Motor neuron (in vitro differentiated cells): ENCODE measurements at regions of chr3 and their contacts with region 1.

Region 1: GRCh38 chr3:108552267-108553159 is 36.7 kb downstream of the CIP2A start:
- ATAC-seq: peak; percentile 23 to 63 (median 38)
- H3K4me3 ChIP-seq: no peak overlapping the region
- H3K27ac ChIP-seq: no peak overlapping the region
- H3K4me1 ChIP-seq: no peaks in the 10 kb centered on the region

Region 2: DNA sequence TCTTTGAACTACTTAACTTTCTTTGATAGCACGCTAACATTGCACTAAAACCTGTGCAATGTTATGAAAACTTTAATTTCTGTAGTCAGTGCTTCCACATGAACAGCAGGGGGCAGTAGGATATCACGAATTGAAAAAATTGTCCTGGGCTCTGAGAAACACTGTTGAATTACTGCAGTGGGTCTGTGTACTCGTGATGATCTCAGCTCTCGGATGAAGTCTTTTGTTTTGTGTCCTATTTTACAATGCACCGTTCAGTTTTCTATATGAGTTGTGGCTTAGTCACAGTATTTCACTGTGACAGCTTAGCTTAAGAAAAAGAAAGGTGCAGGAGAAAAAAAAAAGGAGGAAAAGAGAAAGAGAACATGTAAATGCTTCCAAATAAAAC is 1316.6 kb before region 1 on chr3:
- in situ Hi-C with region 1: loop called in 2 of 9 experiments (anchors 25 kb)
- ATAC-seq: peak; percentile 60 to 79 (median 74)
- H3K4me3 ChIP-seq: peak overlapping the region in 3 of 5 donors; percentile 4 to 11 (median 11)
- H3K27ac ChIP-seq: no peak overlapping the region
- H3K4me1 ChIP-seq: peaks cover 0 to 7% of the 10 kb centered on the region in 2 donors

Region 3: DNA sequence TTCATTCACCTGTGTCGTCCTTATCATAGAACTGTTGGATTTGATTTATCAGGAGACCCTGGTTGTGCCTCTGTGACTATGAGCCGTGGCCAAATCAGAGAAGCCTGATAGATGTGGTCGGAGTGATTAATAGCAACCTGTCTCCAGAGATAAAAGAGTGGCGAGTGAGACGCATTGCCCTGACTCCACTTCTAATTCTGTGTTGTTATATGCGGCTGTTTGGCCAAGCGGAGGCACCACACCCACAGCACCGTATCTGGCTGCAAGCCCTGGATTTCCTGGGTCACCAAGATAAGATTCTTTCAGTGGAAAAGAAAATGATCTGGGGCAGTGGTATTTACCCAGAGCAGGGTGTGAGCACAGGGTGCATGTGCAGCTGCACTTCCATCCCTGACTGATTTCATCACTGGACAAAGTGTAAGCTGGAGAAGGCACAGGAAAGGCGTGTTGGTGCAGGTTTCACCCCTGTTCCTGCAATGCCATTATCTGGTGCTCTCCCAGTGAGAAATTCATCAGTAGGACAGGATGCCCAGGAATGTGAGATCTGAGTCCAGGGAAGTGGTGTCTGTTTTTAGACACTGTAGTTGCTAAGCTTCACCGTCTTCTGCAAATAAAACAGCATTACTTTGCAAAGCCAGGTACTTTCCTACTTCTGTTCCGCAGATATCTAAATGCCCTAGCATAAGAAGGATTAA is 546.3 kb before region 1 on chr3:
- in situ Hi-C with region 1: no loop called
- ATAC-seq: peak; percentile 48 to 79 (median 60)
- H3K4me3 ChIP-seq: no peak overlapping the region
- H3K27ac ChIP-seq: no peak overlapping the region
- H3K4me1 ChIP-seq: peaks cover 0 to 5% of the 10 kb centered on the region in 2 donors

Region 4: GRCh38 chr3:108428586-108428985 is 123.9 kb before region 1 on chr3:
- in situ Hi-C with region 1: no loop called
- ATAC-seq: peak in 1 of 8 experiments; percentile 29
- H3K4me3 ChIP-seq: no peak overlapping the region
- H3K27ac ChIP-seq: no peak overlapping the region
- H3K4me1 ChIP-seq: no peaks in the 10 kb centered on the region

Region 5: DNA sequence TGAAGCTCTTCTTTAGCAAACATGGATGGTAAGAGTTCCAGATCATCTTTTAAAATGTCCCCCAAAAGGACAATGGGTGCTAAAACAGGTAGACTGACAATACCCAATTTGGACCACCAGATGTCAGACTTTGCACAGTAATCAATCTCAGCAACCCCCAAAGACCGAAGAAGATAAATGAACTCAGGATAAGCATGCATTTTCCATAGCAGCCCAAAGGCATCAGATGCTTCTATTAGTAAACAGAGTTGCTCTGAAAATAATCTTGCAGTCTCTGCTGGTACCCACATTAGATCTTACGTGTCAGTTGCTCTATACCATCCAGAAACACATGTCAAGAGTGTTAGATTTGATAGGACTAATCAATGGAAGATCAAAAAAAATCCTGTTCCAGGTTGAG is 62.7 kb before region 1 on chr3:
- in situ Hi-C with region 1: loop called in 1 of 9 experiments (anchors 10 kb)
- ATAC-seq: peak; percentile 22 to 65 (median 48)
- H3K4me3 ChIP-seq: no peak overlapping the region
- H3K27ac ChIP-seq: no peak overlapping the region
- H3K4me1 ChIP-seq: peaks cover 10 to 16% of the 10 kb centered on the region in 2 donors

Region 6: GRCh38 chr3:108931035-108931434 is 378.5 kb after region 1 on chr3:
- in situ Hi-C with region 1: no loop called
- ATAC-seq: no peak
- H3K4me3 ChIP-seq: no peak overlapping the region
- H3K27ac ChIP-seq: no peak overlapping the region
- H3K4me1 ChIP-seq: no peaks in the 10 kb centered on the region